Aorta (tissue), 5 donors: ENCODE measurements at regions of chr16 and their contacts with region 1.

Region 1: DNA sequence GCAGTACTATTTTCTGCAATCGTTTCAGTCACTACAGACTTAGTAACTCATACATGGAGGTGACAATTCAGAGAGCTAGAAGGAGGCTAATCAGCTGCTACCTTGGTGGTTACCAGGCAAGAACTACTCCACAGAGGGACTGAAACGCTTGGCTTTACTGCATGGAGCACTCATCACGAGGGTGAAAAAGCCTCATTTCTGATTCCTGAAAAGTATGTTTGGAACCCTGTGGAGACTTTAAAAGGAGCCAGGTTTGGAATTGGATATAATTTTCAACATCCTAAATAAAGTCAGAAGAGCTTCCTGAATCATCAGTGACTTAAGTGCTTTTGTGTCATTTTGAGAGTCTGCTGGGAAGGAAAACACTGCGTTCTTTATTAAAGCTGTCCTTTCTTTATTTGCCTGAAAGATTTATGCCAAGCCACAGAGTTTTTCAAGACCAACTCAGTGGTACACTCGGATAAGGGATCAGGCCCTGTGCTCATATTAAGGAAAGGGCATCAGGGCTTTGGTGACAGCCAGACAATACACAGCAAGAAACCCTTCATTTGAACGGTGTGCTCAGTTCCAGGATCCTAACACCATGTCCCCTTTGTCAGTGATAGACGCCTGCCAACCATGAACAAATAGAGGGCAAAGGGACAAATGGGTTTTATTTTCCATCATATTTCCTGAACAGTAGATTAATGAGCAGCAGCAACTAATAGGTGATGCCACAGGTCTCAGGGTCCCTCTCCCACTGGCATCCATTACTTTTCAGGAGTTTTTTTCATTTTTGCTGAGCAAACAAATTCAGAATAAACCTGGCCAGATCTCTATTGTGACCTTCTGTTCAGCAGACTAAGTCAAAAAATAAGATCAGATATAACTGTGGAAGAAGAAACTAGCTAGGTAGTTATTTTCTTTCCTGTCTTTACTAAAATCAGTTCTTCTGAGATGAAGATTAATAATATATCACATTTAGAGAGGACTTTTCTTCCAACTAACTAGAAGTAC is 80.5 kb upstream of the CLEC18B start:
- DNase-seq: no peak
- ATAC-seq: peak; percentile 38
- H3K4me3 ChIP-seq: no peak overlapping the region
- H3K27ac ChIP-seq: peak overlapping the region; percentile 15 to 67
- H3K4me1 ChIP-seq: no peaks in the 10 kb centered on the region
- H3K27me3 ChIP-seq: no peaks in the 10 kb centered on the region

Region 2: GRCh38 chr16:74160759-74161158 is 341.0 kb before region 1 on chr16:
- intact Hi-C with region 1: no loop called
- DNase-seq: no peak
- ATAC-seq: no peak
- H3K4me3 ChIP-seq: no peak overlapping the region
- H3K27ac ChIP-seq: no peak overlapping the region
- H3K4me1 ChIP-seq: no peaks in the 10 kb centered on the region
- H3K27me3 ChIP-seq: no peaks in the 10 kb centered on the region

Region 3: GRCh38 chr16:74606521-74607310 is 104.9 kb after region 1 on chr16 and contains the start of gene GLG1:
- intact Hi-C with region 1: loop called in 1 of 2 experiments (anchors 5 kb)
- DNase-seq: peak; percentile 95 to 97
- ATAC-seq: peak; percentile 97
- H3K4me3 ChIP-seq: peak within 1 kb of the TSS; percentile 67 to 83
- H3K27ac ChIP-seq: peak within 1 kb of the TSS in 1 of 2 donors; percentile 59
- H3K4me1 ChIP-seq: peaks cover 2 to 4% of the 10 kb centered on the region in 2 donors
- H3K27me3 ChIP-seq: no peaks in the 10 kb centered on the region
- total RNA-seq, gene GLG1: 150 to 173 TPM

Region 4: DNA sequence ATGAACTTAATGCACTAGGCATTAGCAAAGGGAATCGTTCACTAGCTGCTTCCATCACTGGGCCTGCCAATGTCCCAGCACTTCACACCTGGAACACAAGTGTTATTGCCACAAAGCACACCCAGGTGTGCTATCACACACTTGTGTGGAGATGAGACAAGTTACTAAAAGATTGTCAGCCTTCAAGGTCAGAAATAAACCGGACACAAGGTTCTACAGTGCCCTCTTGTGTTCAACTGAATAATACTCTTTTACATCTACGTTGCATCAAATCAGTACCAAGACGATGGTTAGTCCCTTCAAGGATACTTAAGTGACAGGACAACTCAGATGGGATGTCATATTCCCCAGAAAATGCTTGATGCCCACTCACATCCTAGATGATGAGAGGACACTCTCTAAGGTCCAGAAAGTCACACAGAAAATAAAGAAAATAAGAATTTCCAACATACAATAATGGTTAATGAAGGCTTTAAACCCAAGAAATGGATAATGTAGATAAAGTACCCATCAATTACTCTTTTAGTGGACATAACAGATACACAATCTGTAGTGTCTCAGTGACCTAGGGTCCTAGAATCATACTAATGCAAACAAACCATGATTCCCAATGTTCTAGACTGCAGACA is 121.5 kb after region 1 on chr16:
- intact Hi-C with region 1: loop called in 1 of 2 experiments (anchors 10 kb)
- DNase-seq: no peak
- ATAC-seq: peak; percentile 59
- H3K4me3 ChIP-seq: no peak overlapping the region
- H3K27ac ChIP-seq: no peak overlapping the region
- H3K4me1 ChIP-seq: no peaks in the 10 kb centered on the region
- H3K27me3 ChIP-seq: no peaks in the 10 kb centered on the region